HEK293 (cell line): ENCODE measurements at regions of chr2 and their contacts with region 1.

Region 1: DNA sequence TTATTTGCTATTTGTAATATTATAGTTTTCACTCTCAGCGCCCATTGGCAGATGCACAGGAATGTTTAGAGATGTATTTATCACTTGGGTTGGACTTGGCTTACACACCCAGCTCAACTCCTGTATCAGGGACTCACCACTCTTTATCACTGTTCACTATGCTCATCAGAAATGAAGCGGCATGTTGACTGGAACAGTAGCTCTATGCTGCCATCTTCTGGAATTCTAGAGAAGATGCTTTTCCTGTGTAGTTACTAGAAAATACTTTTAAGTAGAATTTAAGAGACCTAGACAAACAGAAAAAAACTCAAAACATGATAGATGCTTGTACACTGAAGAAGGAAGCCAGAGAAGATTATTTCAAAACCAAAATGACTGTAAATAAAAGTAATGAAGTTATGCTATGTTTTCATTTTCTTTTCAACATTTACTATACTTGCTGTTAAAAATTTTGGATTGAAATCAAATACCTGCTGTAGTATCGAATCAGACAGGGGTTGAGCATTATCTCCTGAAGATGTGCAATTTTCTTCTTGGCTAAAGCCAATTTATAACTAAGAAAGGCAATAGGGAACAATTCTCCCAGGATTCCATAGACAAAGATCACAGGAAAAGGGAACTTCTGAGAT is 47.4 kb upstream of the NXPH2 start:
- H3K4me3 ChIP-seq: no peak overlapping the region
- H3K27ac ChIP-seq: no peak overlapping the region
- H3K4me1 ChIP-seq: no peaks in the 10 kb centered on the region; the same call in 1 of the 2 replicates
- CTCF ChIP-seq: peak; percentile 39; the same call in 1 of the 2 replicates

Region 2: DNA sequence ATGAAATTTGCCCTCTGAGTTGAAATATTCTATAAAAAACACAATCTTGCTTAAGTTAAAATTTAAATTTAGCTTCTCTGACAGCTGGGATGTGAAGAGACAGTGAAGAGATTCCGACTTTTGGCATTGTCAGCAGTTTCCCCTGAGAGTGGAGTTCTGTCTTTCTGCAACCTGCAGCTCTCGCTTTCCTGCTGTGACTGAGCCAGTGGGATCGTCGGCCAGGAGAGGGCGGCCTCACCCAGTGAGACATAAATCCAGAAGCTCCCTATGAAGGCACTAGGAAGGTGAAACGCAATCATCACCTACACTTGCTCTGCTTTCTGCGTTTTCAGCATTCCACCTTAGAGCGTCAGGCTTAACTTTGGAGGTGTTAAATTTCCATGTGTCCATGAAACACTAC is 938.7 kb before region 1 on chr2:
- CTCF ChIA-PET with region 1: interaction called, 17 read pairs
- POLR2A ChIA-PET with region 1: no interaction called
- H3K4me3 ChIP-seq: no peak overlapping the region
- H3K27ac ChIP-seq: no peak overlapping the region
- H3K4me1 ChIP-seq: 0 out of 2 replicates have a peak, but pooled peaks cover 2% of the 10 kb centered on the region
- CTCF ChIP-seq: peak; percentile 41

Region 3: DNA sequence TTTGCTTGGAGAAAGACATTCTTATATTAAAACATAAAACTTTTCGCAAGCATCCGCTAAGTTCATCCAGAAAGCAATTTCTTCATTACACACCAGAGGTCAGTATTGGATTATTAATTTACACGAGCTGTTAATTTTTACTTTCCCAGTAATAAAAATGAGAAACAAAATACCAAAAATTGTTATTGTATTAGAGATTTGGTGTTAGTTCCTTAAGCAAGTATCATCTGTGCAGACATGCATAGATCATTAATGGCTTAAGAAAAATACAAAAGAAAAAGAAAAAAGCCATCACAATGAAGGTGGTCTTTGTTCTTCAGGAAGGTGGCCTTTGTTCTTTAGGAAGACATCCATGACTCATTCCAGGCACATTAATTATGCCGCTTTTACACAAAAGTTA is 916.9 kb before region 1 on chr2:
- CTCF ChIA-PET with region 1: interaction called, 110 read pairs
- POLR2A ChIA-PET with region 1: no interaction called
- H3K4me3 ChIP-seq: no peak overlapping the region
- H3K27ac ChIP-seq: no peak overlapping the region
- H3K4me1 ChIP-seq: no peaks in the 10 kb centered on the region
- CTCF ChIP-seq: no peak

Region 4: DNA sequence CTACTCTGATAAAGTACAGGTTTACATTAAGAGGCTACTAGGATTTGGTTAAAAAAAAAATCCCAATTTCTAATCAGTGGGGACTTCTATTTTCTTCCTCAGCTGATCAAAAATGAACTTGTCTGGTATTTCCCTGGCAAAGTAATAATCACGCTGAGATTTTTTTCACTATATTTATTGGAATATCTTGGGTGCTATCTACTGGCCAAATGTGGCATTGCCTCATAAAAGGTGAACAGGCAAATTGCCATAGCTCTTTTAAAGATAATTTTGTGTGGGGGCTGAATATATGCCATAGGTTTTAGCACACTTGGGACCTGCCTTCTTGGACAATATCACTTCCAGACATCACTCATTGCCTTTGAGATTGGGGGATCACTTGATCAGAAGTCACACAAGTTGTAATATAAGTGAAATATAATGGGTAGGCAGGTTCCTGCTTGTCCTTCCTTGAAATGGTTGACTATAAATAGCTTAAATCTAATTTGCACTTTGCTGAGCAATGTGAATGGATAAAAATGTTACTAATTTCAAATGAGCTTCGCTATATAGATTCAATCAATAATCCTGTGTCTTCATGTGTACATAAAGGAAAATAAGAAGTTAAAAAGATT is 40.4 kb before region 1 on chr2:
- CTCF ChIA-PET with region 1: interaction called, 46 read pairs
- POLR2A ChIA-PET with region 1: no interaction called
- H3K4me3 ChIP-seq: no peak overlapping the region
- H3K27ac ChIP-seq: no peak overlapping the region
- H3K4me1 ChIP-seq: no peaks in the 10 kb centered on the region
- CTCF ChIP-seq: 0 out of 2 replicates have a peak, but pooled peaks have one; percentile 17